Endothelial cell of umbilical vein (primary cell): ENCODE measurements at regions of chr6 and their contacts with region 1.

Region 1: GRCh38 chr6:132471788-132472187 is 41.1 kb downstream of the STX7 start:
- DNase-seq: no peak
- H3K4me3 ChIP-seq: no peak overlapping the region
- H3K27ac ChIP-seq: no peak overlapping the region
- H3K4me1 ChIP-seq: peaks cover 4% of the 10 kb centered on the region
- H3K27me3 ChIP-seq: no peaks in the 10 kb centered on the region
- CTCF ChIP-seq: no peak
- POLR2A ChIP-seq: no peak

Region 2: DNA sequence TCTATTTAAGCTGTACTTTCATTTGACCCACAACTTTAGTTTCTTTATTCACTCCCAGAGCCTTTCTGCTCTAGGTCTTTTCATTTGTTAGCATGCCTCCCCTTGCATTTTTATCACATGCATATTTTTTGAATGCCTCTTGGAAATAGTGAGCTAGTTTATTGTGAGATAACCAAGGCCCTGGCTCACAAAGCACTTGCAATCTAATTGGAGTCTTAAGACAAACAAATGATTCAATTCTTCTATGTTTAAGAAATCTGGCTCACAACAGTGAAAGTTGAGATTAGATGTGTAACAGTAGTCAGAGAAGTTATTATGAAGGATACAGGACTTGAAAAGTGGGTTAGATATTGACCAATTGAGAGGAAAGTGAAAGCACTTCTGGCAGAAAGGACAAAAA is 243.9 kb before region 1 on chr6:
- CTCF ChIA-PET with region 1: no interaction called
- POLR2A ChIA-PET with region 1: no interaction called
- dilution Hi-C with region 1: no loop called
- intact Hi-C with region 1: no loop called
- DNase-seq: no peak
- H3K4me3 ChIP-seq: no peak overlapping the region
- H3K27ac ChIP-seq: no peak overlapping the region
- H3K4me1 ChIP-seq: no peaks in the 10 kb centered on the region
- H3K27me3 ChIP-seq: no peaks in the 10 kb centered on the region
- CTCF ChIP-seq: no peak
- POLR2A ChIP-seq: no peak

Region 3: GRCh38 chr6:132391391-132392271 is 80.2 kb before region 1 on chr6:
- CTCF ChIA-PET with region 1: no interaction called
- POLR2A ChIA-PET with region 1: no interaction called
- dilution Hi-C with region 1: no loop called
- intact Hi-C with region 1: loop called (anchors 1 kb)
- DNase-seq: no peak
- H3K4me3 ChIP-seq: no peak overlapping the region
- H3K27ac ChIP-seq: no peak overlapping the region
- H3K4me1 ChIP-seq: no peaks in the 10 kb centered on the region
- H3K27me3 ChIP-seq: peaks cover 3 to 21% of the 10 kb centered on the region in 2 experiments
- CTCF ChIP-seq: no peak
- POLR2A ChIP-seq: no peak